ENCODE measurements at regions of chr6 and their contacts with region 1.

Region 1: DNA sequence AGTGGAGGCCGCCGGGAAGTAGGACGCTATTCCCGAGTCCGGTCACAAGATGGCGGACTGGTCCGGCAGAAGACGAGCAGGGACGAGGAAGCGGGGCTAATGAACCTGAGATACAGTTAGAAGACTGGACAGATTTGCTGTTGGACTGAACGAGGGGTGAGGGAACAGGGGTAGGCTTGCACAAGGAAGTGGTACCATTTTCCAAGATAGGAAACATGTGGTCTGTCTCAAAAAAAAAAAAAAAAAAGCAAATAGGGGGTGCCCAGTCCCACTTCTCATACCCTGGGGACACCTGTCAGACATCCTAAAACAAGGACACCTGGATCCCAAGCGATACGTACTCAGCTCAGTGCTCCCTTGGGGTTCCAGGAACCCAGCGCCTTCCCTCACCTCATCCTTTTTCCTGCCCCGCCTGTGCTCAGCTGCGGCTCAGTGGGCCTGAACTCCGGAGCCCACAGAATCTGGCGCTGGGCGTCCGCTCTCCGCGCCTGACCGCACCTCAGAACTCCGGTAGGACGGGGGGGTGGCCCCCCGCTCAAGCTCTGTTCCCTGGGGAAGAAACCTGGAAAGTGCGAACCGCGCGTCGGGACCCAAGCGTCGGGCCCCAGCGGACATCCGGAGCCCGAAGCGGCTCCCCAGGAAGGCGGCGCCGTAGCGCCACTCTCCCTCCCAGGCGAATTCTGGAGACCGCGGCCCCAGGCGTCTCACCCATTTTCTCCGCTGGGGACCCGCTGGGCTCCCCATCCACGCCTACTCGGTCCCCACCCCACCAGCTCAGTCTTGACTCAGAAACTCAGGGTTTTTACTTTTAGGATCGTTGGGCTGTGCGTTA is at the start of gene LY6G5C:
- DNase-seq: peak; percentile 88
- ATAC-seq: peak; percentile 94
- total RNA-seq, gene LY6G5C: 1.3 TPM

Region 2: GRCh38 chr6:31776989-31777666 is 96.1 kb after region 1 on chr6 and contains the start of gene VWA7:
- intact Hi-C with region 1: loop called (anchors 10 kb)
- DNase-seq: peak; percentile 80
- ATAC-seq: peak; percentile 91
- total RNA-seq, gene VWA7: 9.5 TPM

Region 3: DNA sequence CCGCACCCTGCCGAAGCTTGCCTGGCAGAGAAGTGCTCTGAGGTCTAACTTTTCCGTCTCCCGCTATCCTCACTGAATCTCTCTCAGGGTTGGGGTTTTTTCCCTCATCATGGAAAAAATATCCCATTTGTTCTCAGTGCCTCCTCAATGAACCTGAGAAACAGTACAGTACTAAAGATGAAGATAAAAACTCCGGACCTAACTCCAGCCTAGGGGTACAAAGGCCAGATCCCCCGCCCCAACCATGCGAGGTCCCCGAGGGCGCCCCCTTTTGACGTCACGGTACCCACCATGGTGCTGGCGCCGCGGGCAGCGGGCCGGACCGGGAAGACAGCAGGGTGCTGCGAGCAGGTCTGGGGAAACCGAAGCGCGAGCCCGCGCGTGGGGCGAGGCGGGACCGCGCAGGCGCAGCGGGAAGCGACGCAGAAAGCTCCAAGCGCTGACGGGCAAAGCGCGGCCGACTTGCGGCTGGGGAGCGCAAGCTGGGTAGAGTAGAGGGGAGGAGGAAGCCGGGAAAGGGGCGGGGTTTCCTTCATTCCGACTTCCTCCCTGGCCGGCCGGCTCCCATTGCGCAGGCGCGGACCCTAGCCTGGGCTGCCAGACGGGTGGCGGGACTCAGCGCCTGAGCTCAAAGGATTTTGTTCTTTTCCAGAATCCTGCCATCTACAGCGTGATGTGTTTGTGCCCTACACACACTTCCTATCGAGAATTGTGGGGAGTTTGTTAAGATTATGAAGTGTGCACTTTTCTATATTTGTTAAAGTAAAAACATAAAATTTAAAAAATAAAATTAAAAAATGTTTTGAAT is 125.6 kb after region 1 on chr6 and contains the start of gene LSM2:
- intact Hi-C with region 1: no loop called
- DNase-seq: peak; percentile 99
- ATAC-seq: peak; percentile 99
- total RNA-seq, gene LSM2: 23.0 TPM

Region 4: GRCh38 chr6:31834434-31835198 is 153.6 kb after region 1 on chr6:
- intact Hi-C with region 1: loop called (anchors 2 kb)
- DNase-seq: peak; percentile 93
- ATAC-seq: peak; percentile 92

Region 5: GRCh38 chr6:31952140-31952805 is 271.2 kb after region 1 on chr6:
- intact Hi-C with region 1: loop called (anchors 5 kb)
- DNase-seq: peak; percentile 82
- ATAC-seq: peak; percentile 77